ENCODE measurements at regions of chr1 and their contacts with region 1.

Region 1: GRCh38 chr1:99737016-99737415 is 29.4 kb downstream of the FRRS1 start:
- DNase-seq: peak; percentile 34 to 45
- H3K4me3 ChIP-seq: no peak overlapping the region
- H3K4me3 Mint-ChIP-seq: no peak overlapping the region
- H3K27ac Mint-ChIP-seq: no peak overlapping the region
- H3K4me1 ChIP-seq: peaks cover 13% of the 10 kb centered on the region
- H3K4me1 Mint-ChIP-seq: peaks cover 12% of the 10 kb centered on the region
- H3K27me3 ChIP-seq: no peaks in the 10 kb centered on the region
- H3K27me3 Mint-ChIP-seq: no peaks in the 10 kb centered on the region
- CTCF ChIP-seq: peak in 1 of 2 experiments; percentile 37

Region 2: GRCh38 chr1:99599678-99600175 is 137.3 kb before region 1 on chr1:
- CTCF ChIA-PET with region 1: no interaction called
- POLR2A ChIA-PET with region 1: no interaction called
- intact Hi-C with region 1: no loop called
- DNase-seq: peak; percentile 6 to 52
- H3K4me3 ChIP-seq: no peak overlapping the region
- H3K4me3 Mint-ChIP-seq: no peak overlapping the region
- H3K27ac Mint-ChIP-seq: no peak overlapping the region
- H3K4me1 ChIP-seq: 0 out of 2 replicates have a peak, but pooled peaks cover 4% of the 10 kb centered on the region
- H3K4me1 Mint-ChIP-seq: no peaks in the 10 kb centered on the region
- H3K27me3 ChIP-seq: no peaks in the 10 kb centered on the region
- H3K27me3 Mint-ChIP-seq: no peaks in the 10 kb centered on the region
- CTCF ChIP-seq: no peak

Region 3: DNA sequence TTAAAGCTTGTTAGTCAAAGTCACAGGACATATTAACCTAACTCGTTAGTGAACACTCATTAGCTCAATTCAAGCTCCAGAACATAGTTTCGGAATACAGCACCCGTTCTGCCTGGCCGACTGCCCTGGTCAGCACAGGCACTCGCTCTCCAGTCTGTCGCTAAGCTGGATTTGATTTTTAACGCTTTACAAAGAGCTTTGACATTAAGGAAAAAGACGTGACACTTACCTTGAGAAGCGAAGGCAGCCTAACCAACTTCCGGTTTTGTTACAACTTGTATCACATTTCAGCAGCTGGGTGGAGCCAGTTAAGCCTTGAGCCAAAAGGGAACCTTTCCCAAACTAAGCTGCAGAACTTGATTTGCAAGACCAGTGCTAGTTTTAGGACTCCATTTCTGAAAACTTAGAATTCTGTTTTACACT is 29.4 kb after region 1 on chr1 and contains the start of gene FRRS1:
- CTCF ChIA-PET with region 1: no interaction called
- POLR2A ChIA-PET with region 1: no interaction called
- intact Hi-C with region 1: loop called (anchors 2 kb)
- DNase-seq: peak; percentile 67 to 68
- H3K4me3 ChIP-seq: peak within 1 kb of the TSS; percentile 51
- H3K4me3 Mint-ChIP-seq: peak within 1 kb of the TSS; percentile 95
- H3K27ac Mint-ChIP-seq: peak within 1 kb of the TSS; percentile 96
- H3K4me1 ChIP-seq: peaks cover 15% of the 10 kb centered on the region
- H3K4me1 Mint-ChIP-seq: no peaks in the 10 kb centered on the region
- H3K27me3 ChIP-seq: no peaks in the 10 kb centered on the region
- H3K27me3 Mint-ChIP-seq: no peaks in the 10 kb centered on the region
- CTCF ChIP-seq: no peak
- total RNA-seq, gene FRRS1: 9.6 and 11.1 TPM in 2 replicates

Region 4: DNA sequence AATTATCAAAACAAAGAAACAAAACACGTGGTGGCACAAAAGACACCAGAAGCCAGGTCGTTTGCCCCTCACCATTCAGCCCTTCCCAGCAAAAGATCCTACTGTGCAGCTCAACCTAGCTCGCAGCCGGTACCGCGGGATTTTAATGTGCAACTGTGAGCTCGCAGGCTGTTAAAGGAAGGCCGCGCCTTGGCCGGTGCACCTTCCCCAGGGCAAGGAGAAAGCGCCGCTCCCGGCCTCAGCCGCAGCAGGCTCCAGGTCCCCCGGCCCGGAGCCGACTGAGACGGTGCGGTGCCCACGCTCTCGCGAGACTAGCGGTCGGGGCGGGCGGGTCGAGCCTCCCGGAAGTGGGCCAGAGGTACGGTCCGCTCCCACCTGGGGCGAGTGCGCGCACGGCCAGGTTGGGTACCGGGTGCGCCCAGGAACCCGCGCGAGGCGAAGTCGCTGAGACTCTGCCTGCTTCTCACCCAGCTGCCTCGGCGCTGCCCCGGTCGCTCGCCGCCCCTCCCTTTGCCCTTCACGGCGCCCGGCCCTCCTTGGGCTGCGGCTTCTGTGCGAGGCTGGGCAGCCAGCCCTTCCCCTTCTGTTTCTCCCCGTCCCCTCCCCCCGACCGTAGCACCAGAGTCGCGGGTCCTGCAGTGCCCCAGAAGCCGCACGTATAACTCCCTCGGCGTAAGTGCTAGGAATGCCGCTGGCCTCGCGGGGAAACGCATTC is 112.9 kb after region 1 on chr1 and contains the start of gene AGL:
- CTCF ChIA-PET with region 1: no interaction called
- POLR2A ChIA-PET with region 1: no interaction called
- intact Hi-C with region 1: no loop called
- DNase-seq: peak; percentile 92
- H3K4me3 ChIP-seq: peak within 1 kb of the TSS; percentile 83
- H3K4me3 Mint-ChIP-seq: peak within 1 kb of the TSS; percentile 95
- H3K27ac Mint-ChIP-seq: peak within 1 kb of the TSS; percentile 93
- H3K4me1 ChIP-seq: 0 out of 2 replicates have a peak, but pooled peaks cover 4% of the 10 kb centered on the region
- H3K4me1 Mint-ChIP-seq: peaks cover 24% of the 10 kb centered on the region
- H3K27me3 ChIP-seq: no peaks in the 10 kb centered on the region
- H3K27me3 Mint-ChIP-seq: no peaks in the 10 kb centered on the region
- CTCF ChIP-seq: no peak
- total RNA-seq, gene AGL: 23.6 and 24.2 TPM in 2 replicates